HCT116 (cell line): ENCODE measurements at regions of chr4 and their contacts with region 1.

Region 1: GRCh38 chr4:170259631-170260153 is 169.9 kb upstream of the AADAT start:
- DNase-seq: peak; percentile 93
- ATAC-seq: peak; percentile 98
- H3K4me3 ChIP-seq: no peak overlapping the region
- H3K27ac ChIP-seq: no peak overlapping the region
- H3K4me1 ChIP-seq: no peaks in the 10 kb centered on the region
- H3K27me3 ChIP-seq: no peaks in the 10 kb centered on the region
- CTCF ChIP-seq: peak; percentile 94 to 99 (median 98)
- POLR2A ChIP-seq: no peak
- RAD21 ChIP-seq: peak; percentile 97

Region 2: DNA sequence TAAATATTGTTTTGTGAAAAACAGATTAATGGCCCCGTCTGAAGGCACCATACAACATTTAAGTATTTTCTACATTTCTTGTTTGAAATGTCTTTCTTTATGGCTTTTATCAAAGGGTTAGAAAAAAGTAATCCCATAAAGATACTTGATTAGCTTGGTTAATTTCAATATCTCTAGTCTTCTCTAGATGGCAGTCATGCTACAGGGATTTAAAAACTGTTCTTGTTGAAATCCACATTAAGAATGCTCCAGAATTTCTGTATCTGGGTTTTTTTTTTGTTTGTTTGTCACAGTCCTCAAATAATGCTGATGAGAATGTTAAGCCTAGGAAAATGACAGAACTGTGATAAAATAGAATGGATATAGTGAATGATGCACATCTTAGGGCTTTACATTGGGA is 60.9 kb before region 1 on chr4:
- CTCF ChIA-PET with region 1: interaction called, 30 read pairs
- POLR2A ChIA-PET with region 1: no interaction called
- RAD21 ChIA-PET with region 1: interaction called in 1 of 2 experiments, 4 read pairs
- intact Hi-C with region 1: loop called (anchors 2 kb)
- DNase-seq: peak; percentile 4
- ATAC-seq: no peak
- H3K4me3 ChIP-seq: no peak overlapping the region
- H3K27ac ChIP-seq: no peak overlapping the region
- H3K4me1 ChIP-seq: no peaks in the 10 kb centered on the region
- H3K27me3 ChIP-seq: no peaks in the 10 kb centered on the region
- CTCF ChIP-seq: peak; percentile 33 to 54 (median 53); a peak in 5 of 6 replicates
- POLR2A ChIP-seq: no peak
- RAD21 ChIP-seq: peak; percentile 69

Region 3: DNA sequence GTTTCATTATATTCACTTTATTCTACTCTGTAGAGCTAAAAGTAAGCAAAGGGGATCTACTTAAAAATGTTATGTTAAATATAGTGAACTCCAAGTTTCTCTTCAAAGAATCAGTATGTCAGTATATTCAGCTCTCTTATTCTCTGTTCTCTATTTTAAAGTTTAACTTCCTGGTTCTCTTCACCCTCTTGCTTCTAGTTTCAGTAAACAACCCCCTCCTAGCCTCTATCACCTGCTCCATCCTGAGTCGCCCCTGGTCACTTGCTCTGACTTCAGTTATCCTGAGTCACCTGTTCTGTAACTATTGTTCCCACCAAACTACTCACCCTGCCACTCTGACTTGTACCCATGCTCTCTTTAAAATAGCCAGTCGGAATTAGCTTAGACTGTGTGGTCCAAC is 10.9 kb after region 1 on chr4:
- CTCF ChIA-PET with region 1: interaction called, 11 read pairs
- POLR2A ChIA-PET with region 1: no interaction called
- RAD21 ChIA-PET with region 1: no interaction called
- intact Hi-C with region 1: no loop called
- DNase-seq: no peak
- ATAC-seq: no peak
- H3K4me3 ChIP-seq: no peak overlapping the region
- H3K27ac ChIP-seq: no peak overlapping the region
- H3K4me1 ChIP-seq: no peaks in the 10 kb centered on the region
- H3K27me3 ChIP-seq: no peaks in the 10 kb centered on the region
- CTCF ChIP-seq: no peak
- POLR2A ChIP-seq: no peak
- RAD21 ChIP-seq: no peak

Region 4: DNA sequence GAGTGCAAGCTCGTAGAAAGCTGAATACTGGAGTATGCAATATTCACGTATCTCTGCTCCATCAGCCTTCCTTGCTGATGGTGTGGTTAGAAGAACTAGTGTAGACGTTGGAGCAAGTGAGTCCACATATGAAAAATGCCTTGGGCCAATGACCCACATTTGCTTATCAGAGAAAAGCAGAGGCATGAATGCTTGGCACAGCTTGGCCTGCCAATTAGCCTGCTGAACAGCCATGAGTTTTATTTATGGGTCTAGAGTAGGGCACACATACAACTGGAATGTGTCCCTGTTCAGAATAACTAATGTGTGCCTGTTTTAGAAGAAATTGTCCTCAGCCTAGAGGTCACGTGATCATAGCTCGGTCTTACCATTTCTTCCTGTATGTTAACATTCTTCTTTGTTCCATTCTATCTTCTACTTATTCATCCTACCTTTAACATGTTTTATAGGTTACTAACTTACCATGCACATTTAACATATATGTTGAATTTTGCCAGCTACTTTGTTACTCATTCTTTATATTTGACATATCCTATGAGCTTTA is 262.8 kb after region 1 on chr4:
- CTCF ChIA-PET with region 1: no interaction called
- POLR2A ChIA-PET with region 1: no interaction called
- RAD21 ChIA-PET with region 1: no interaction called
- intact Hi-C with region 1: no loop called
- DNase-seq: no peak
- ATAC-seq: no peak
- H3K4me3 ChIP-seq: no peak overlapping the region
- H3K27ac ChIP-seq: no peak overlapping the region
- H3K4me1 ChIP-seq: no peaks in the 10 kb centered on the region
- H3K27me3 ChIP-seq: no peaks in the 10 kb centered on the region
- CTCF ChIP-seq: no peak
- POLR2A ChIP-seq: no peak
- RAD21 ChIP-seq: no peak

Region 5: GRCh38 chr4:170758988-170759387 is 499.3 kb after region 1 on chr4:
- CTCF ChIA-PET with region 1: no interaction called
- POLR2A ChIA-PET with region 1: no interaction called
- RAD21 ChIA-PET with region 1: no interaction called
- intact Hi-C with region 1: no loop called
- DNase-seq: no peak
- ATAC-seq: no peak
- H3K4me3 ChIP-seq: no peak overlapping the region
- H3K27ac ChIP-seq: no peak overlapping the region
- H3K4me1 ChIP-seq: no peaks in the 10 kb centered on the region
- H3K27me3 ChIP-seq: no peaks in the 10 kb centered on the region
- CTCF ChIP-seq: no peak
- POLR2A ChIP-seq: no peak
- RAD21 ChIP-seq: no peak

Region 6: DNA sequence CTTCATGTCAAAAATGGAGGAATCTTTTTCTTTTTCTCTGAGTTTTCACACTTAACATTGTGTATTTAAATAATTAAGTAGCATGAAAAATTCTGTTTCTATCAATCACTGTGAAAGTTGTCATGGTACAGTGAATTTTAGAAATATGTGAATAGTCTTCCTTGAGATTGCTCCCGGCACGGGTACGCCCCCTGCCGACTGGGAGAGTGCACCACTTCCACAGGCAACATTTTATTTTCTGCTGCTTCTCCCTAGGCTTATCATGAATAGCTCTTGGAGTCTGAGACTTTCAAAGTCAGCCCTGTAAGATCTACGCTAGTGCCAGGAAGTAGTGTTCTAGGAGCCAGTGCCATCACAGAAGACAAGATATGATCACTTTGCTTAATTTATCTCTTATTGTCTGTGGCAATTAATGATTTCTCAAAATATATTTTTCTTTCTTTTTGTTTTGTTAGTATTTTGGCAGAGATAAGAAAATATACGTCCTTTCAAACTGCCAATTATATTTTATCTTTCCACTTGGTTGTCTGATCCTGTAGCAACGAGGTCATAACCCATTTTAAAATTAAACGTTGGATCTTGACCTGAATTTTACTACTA is 593.8 kb after region 1 on chr4:
- CTCF ChIA-PET with region 1: interaction called, 9 read pairs
- POLR2A ChIA-PET with region 1: no interaction called
- RAD21 ChIA-PET with region 1: no interaction called
- intact Hi-C with region 1: loop called (anchors 2 kb)
- DNase-seq: peak; percentile 48
- ATAC-seq: peak; percentile 91
- H3K4me3 ChIP-seq: no peak overlapping the region
- H3K27ac ChIP-seq: no peak overlapping the region
- H3K4me1 ChIP-seq: no peaks in the 10 kb centered on the region
- H3K27me3 ChIP-seq: no peaks in the 10 kb centered on the region
- CTCF ChIP-seq: peak; percentile 65 to 92 (median 91)
- POLR2A ChIP-seq: no peak
- RAD21 ChIP-seq: peak; percentile 72

Region 7: GRCh38 chr4:172202480-172203076 is 1942.9 kb after region 1 on chr4:
- CTCF ChIA-PET with region 1: interaction called, 5 read pairs
- POLR2A ChIA-PET with region 1: no interaction called
- RAD21 ChIA-PET with region 1: interaction called in 1 of 2 experiments, 3 read pairs
- intact Hi-C with region 1: loop called (anchors 1 kb)
- DNase-seq: peak; percentile 32
- ATAC-seq: peak; percentile 67
- H3K4me3 ChIP-seq: no peak overlapping the region
- H3K27ac ChIP-seq: no peak overlapping the region
- H3K4me1 ChIP-seq: no peaks in the 10 kb centered on the region
- H3K27me3 ChIP-seq: no peaks in the 10 kb centered on the region
- CTCF ChIP-seq: peak; percentile 56 to 75 (median 63)
- POLR2A ChIP-seq: no peak
- RAD21 ChIP-seq: peak; percentile 83